PC-9 (cell line): ENCODE measurements at regions of chr19 and their contacts with region 1.

Region 1: GRCh38 chr19:46840136-46840942 is 10.3 kb downstream of the AP2S1 start:
- DNase-seq: peak; percentile 48 to 64
- H3K4me3 ChIP-seq: no peak overlapping the region
- H3K27ac ChIP-seq: peak overlapping the region; percentile 44
- H3K4me1 ChIP-seq: peaks cover 19% of the 10 kb centered on the region
- H3K27me3 ChIP-seq: no peaks in the 10 kb centered on the region
- CTCF ChIP-seq: peak; percentile 98

Region 2: GRCh38 chr19:46529622-46530462 is 310.5 kb before region 1 on chr19:
- CTCF ChIA-PET with region 1: interaction called, 11 read pairs
- POLR2A ChIA-PET with region 1: no interaction called
- intact Hi-C with region 1: no loop called
- DNase-seq: peak; percentile 42 to 64
- H3K4me3 ChIP-seq: no peak overlapping the region
- H3K27ac ChIP-seq: no peak overlapping the region
- H3K4me1 ChIP-seq: peaks cover 8% of the 10 kb centered on the region; the same call in 1 of the 2 replicates
- H3K27me3 ChIP-seq: 0 out of 2 replicates have a peak, but pooled peaks cover 4% of the 10 kb centered on the region
- CTCF ChIP-seq: peak; percentile 98

Region 3: DNA sequence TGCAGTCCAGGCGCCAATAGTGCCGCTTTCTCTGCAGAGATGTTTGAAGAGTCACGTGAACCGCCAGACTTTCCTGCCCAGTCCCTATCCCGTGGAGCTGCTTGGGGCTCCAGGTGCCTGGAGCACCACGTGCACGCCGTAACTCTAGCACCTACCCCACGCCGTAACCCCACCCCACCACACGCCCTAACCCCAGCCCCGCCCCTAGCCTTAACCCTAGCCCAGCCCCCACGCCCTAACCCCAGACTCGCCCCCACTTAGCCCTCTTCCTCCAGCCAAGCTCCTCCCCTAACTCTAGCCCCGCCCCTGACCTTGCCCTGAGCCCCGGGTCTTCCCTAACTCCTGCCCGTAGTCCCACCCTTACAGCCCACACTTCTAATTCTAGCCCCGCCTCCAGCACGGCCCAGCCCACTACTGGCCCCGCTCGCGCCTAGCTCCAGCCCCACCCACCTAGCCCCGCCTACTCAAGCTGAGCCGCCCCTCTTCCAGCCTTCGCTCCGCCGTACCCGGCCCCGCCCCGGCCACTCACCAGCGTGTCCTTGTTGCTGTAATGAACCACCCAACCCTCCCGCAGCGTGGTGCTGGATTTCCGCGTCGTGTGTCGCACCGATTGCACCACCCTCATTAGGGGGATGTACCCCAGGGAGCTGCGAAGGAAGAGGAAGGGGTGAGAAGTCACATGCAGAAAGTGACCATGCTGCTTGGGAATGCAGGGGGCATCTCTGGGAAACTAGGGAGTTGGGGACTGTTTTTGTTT is 143.0 kb before region 1 on chr19:
- CTCF ChIA-PET with region 1: no interaction called
- POLR2A ChIA-PET with region 1: no interaction called
- intact Hi-C with region 1: no loop called
- DNase-seq: no peak
- H3K4me3 ChIP-seq: no peak overlapping the region
- H3K27ac ChIP-seq: no peak overlapping the region
- H3K4me1 ChIP-seq: no peaks in the 10 kb centered on the region
- H3K27me3 ChIP-seq: no peaks in the 10 kb centered on the region
- CTCF ChIP-seq: no peak

Region 4: GRCh38 chr19:46825525-46825971 is 14.8 kb before region 1 on chr19:
- CTCF ChIA-PET with region 1: interaction called, 14 read pairs
- POLR2A ChIA-PET with region 1: interaction called, 9 read pairs
- intact Hi-C with region 1: no loop called
- DNase-seq: peak in 1 of 2 experiments; percentile 93
- H3K4me3 ChIP-seq: no peak overlapping the region; the same call in 1 of the 2 replicates
- H3K27ac ChIP-seq: peak overlapping the region; percentile 49
- H3K4me1 ChIP-seq: peaks cover 58% of the 10 kb centered on the region
- H3K27me3 ChIP-seq: no peaks in the 10 kb centered on the region
- CTCF ChIP-seq: 0 out of 2 replicates have a peak, but pooled peaks have one; percentile 31

Region 5: GRCh38 chr19:46954993-46955812 is 114.9 kb after region 1 on chr19:
- CTCF ChIA-PET with region 1: no interaction called
- POLR2A ChIA-PET with region 1: no interaction called
- intact Hi-C with region 1: no loop called
- DNase-seq: peak in 1 of 2 experiments; percentile 58
- H3K4me3 ChIP-seq: no peak overlapping the region
- H3K27ac ChIP-seq: peak overlapping the region; percentile 37
- H3K4me1 ChIP-seq: peaks cover 33% of the 10 kb centered on the region
- H3K27me3 ChIP-seq: no peaks in the 10 kb centered on the region
- CTCF ChIP-seq: no peak